Activated naive CD4-positive, alpha-beta T cell treated with anti-CD3 and anti-CD28 coated beads, Interleukin-2, amount 10 ng/mL, durations not matched to agents 7 days and 5 days (primary cell): ENCODE measurements at regions of chr4 and their contacts with region 1.

Region 1: GRCh38 chr4:4248029-4248884 is at the start of gene TMEM128:
- DNase-seq: peak; percentile 95
- H3K4me3 Mint-ChIP-seq: peak within 1 kb of the TSS; percentile 76
- H3K27ac Mint-ChIP-seq: peak within 1 kb of the TSS; percentile 97
- H3K4me1 Mint-ChIP-seq: peaks cover 30% of the 10 kb centered on the region
- H3K27me3 Mint-ChIP-seq: peaks cover 13% of the 10 kb centered on the region

Region 2: GRCh38 chr4:4260253-4260652 is 12.0 kb after region 1 on chr4:
- CTCF ChIA-PET with region 1: interaction called, 10 read pairs
- DNase-seq: no peak
- H3K4me3 Mint-ChIP-seq: no peak overlapping the region
- H3K27ac Mint-ChIP-seq: no peak overlapping the region
- H3K4me1 Mint-ChIP-seq: no peaks in the 10 kb centered on the region
- H3K27me3 Mint-ChIP-seq: peaks cover 17% of the 10 kb centered on the region

Region 3: GRCh38 chr4:4714331-4714730 is 466.1 kb after region 1 on chr4:
- CTCF ChIA-PET with region 1: no interaction called
- DNase-seq: no peak
- H3K4me3 Mint-ChIP-seq: no peak overlapping the region
- H3K27ac Mint-ChIP-seq: no peak overlapping the region
- H3K4me1 Mint-ChIP-seq: no peaks in the 10 kb centered on the region
- H3K27me3 Mint-ChIP-seq: no peaks in the 10 kb centered on the region